ENCODE measurements at regions of chr5 and their contacts with region 1.

Region 1: DNA sequence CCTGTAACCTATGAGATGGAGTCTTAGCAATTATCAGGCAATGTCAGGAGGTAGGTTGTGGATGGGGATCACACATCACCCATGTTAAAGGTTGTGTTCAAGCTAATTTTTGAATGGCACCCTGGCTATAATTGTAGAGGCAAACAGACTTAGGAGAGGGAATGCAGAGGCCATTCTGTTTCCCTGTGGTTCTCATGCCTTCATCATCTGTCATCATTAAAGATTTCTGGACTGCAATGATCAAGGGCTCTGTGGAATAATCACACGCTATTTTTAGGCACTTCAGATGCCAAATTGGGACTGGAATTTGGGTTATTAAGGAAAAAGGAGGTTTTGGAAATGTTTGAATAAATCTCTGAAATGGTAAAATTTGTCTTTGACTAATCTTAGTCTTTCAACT is 1065.4 kb downstream of the TAF11L14 start:
- DNase-seq: no peak
- ATAC-seq: no peak
- H3K4me3 ChIP-seq: no peak overlapping the region
- H3K27ac ChIP-seq: no peak overlapping the region
- H3K4me1 ChIP-seq: peaks cover 0 to 10% (median 0%) of the 10 kb centered on the region in 12 donors
- H3K27me3 ChIP-seq: no peaks in the 10 kb centered on the region
- CTCF ChIP-seq: no peak
- POLR2A ChIP-seq: no peak

Region 2: GRCh38 chr5:18393589-18394442 is 305.9 kb before region 1 on chr5:
- intact Hi-C with region 1: loop called in 2 of 10 experiments (anchors 10 kb)
- DNase-seq: peak in 1 of 5 donors; percentile 8
- ATAC-seq: no peak
- H3K4me3 ChIP-seq: no peak overlapping the region
- H3K27ac ChIP-seq: no peak overlapping the region
- H3K4me1 ChIP-seq: no peaks in the 10 kb centered on the region
- H3K27me3 ChIP-seq: peaks cover 0 to 7% (median 0%) of the 10 kb centered on the region in 9 donors
- CTCF ChIP-seq: peak; percentile 31 to 72 (median 55)
- POLR2A ChIP-seq: no peak

Region 3: GRCh38 chr5:18465833-18466591 is 233.7 kb before region 1 on chr5:
- intact Hi-C with region 1: loop called in 3 of 10 experiments (anchors 5 to 10 kb)
- DNase-seq: peak in 1 of 5 donors; percentile 23
- ATAC-seq: no peak
- H3K4me3 ChIP-seq: no peak overlapping the region
- H3K27ac ChIP-seq: no peak overlapping the region
- H3K4me1 ChIP-seq: no peaks in the 10 kb centered on the region
- H3K27me3 ChIP-seq: no peaks in the 10 kb centered on the region
- CTCF ChIP-seq: peak; percentile 22 to 64 (median 37)
- POLR2A ChIP-seq: no peak